B cell (primary cell): ENCODE measurements at regions of chr19 and their contacts with region 1.

Region 1: GRCh38 chr19:48110350-48110966 is at the start of gene PLA2G4C:
- DNase-seq: peak; percentile 90
- ATAC-seq: peak; percentile 78
- H3K4me3 ChIP-seq: peak within 1 kb of the TSS in 4 of 5 experiments; percentile 47 to 92 (median 83)
- H3K4me3 Mint-ChIP-seq: peak within 1 kb of the TSS; percentile 87
- H3K27ac ChIP-seq: peak within 1 kb of the TSS; percentile 74 to 99
- H3K27ac Mint-ChIP-seq: peak within 1 kb of the TSS; percentile 92
- H3K4me1 ChIP-seq: peaks cover 25 to 27% of the 10 kb centered on the region in 2 donors
- H3K4me1 Mint-ChIP-seq: peaks cover 16% of the 10 kb centered on the region
- H3K27me3 ChIP-seq: no peaks in the 10 kb centered on the region
- H3K27me3 Mint-ChIP-seq: no peaks in the 10 kb centered on the region
- CTCF ChIP-seq: no peak
- total RNA-seq, gene PLA2G4C: 12.3 and 17.4 TPM in 2 replicates

Region 2: GRCh38 chr19:48152551-48152950 is 42.1 kb after region 1 on chr19:
- CTCF ChIA-PET with region 1: interaction called, 113 read pairs
- POLR2A ChIA-PET with region 1: interaction called, 3 read pairs
- intact Hi-C with region 1: no loop called
- DNase-seq: peak; percentile 75
- ATAC-seq: peak; percentile 54
- H3K4me3 ChIP-seq: no peak overlapping the region
- H3K4me3 Mint-ChIP-seq: no peak overlapping the region
- H3K27ac ChIP-seq: no peak overlapping the region
- H3K27ac Mint-ChIP-seq: no peak overlapping the region
- H3K4me1 ChIP-seq: no peaks in the 10 kb centered on the region
- H3K4me1 Mint-ChIP-seq: no peaks in the 10 kb centered on the region
- H3K27me3 ChIP-seq: no peaks in the 10 kb centered on the region
- H3K27me3 Mint-ChIP-seq: no peaks in the 10 kb centered on the region
- CTCF ChIP-seq: peak; percentile 92

Region 3: DNA sequence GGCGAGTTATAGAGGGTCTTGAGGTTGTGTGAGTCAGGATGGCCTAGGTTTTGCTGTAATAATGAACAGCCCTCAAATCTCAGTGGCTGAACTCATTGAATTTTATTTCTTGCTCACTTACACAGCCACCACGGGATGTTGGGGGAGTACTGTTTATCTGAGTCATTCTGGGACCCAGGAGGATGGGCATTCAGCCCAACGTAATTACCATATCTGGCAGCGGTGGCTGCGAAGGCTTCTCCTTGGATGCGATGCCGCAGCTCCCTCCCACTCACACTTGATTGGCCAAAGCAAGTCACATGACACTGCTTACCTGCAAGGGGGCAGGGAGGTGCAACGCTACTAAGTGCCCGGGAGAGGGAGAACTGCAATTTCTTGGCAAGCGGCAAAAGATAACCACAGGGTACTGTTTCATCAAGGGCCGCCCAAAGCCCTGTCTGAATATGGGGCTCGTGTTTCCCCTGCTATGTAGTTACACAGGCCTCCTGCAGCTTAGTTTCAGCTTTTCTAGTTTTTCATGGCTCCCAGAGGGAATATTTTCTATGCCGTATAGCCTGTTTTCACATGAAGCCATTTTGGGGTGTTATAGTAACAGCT is 79.9 kb after region 1 on chr19:
- CTCF ChIA-PET with region 1: interaction called, 6 read pairs
- POLR2A ChIA-PET with region 1: no interaction called
- intact Hi-C with region 1: loop called (anchors 1 kb)
- DNase-seq: peak; percentile 53
- ATAC-seq: peak; percentile 72
- H3K4me3 ChIP-seq: no peak overlapping the region
- H3K4me3 Mint-ChIP-seq: no peak overlapping the region
- H3K27ac ChIP-seq: no peak overlapping the region
- H3K27ac Mint-ChIP-seq: no peak overlapping the region
- H3K4me1 ChIP-seq: peaks cover 17 to 19% of the 10 kb centered on the region in 2 donors
- H3K4me1 Mint-ChIP-seq: peaks cover 28% of the 10 kb centered on the region
- H3K27me3 ChIP-seq: no peaks in the 10 kb centered on the region
- H3K27me3 Mint-ChIP-seq: no peaks in the 10 kb centered on the region
- CTCF ChIP-seq: peak; percentile 34

Region 4: DNA sequence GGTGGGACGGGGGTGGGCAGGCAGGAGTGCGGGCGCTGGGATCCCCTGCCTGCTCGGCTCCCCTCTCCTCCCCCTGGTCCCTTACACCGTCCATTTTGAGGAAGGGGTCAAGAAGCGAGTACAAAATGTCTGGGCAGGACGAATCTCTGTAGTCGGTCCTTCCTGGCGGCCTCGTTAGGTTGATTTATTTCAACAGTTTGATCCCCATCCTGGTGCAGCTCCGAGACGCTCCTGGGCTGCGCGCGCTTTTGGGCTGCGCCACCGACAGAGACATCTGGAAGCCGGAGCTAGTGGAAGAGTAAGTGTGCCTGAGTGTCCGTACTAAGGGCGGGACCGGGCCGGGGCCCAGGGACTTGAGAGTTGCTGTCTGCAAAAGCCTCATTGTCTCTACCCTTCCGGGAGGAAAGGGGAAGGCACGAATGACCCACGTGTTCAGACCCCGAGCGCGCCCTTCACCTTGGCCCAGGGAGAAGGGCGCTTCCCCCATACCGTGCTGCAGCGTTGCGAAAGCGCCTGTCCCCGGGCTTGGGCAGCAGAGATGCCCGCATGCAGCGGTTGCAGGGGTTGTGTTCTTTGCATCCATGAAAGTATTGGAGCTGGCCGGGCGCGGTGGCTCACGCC is 161.2 kb after region 1 on chr19:
- CTCF ChIA-PET with region 1: interaction called, 12 read pairs
- POLR2A ChIA-PET with region 1: no interaction called
- intact Hi-C with region 1: no loop called
- DNase-seq: peak; percentile 53
- ATAC-seq: peak; percentile 55
- H3K4me3 ChIP-seq: peak overlapping the region; percentile 55 to 82 (median 74)
- H3K4me3 Mint-ChIP-seq: peak overlapping the region; percentile 97
- H3K27ac ChIP-seq: no peak overlapping the region
- H3K27ac Mint-ChIP-seq: peak overlapping the region; percentile 87
- H3K4me1 ChIP-seq: peaks cover 3 to 15% of the 10 kb centered on the region in 2 donors
- H3K4me1 Mint-ChIP-seq: peaks cover 13% of the 10 kb centered on the region
- H3K27me3 ChIP-seq: peaks cover 0 to 2% (median 0%) of the 10 kb centered on the region in 4 experiments
- H3K27me3 Mint-ChIP-seq: peaks cover 3% of the 10 kb centered on the region
- CTCF ChIP-seq: no peak